Ascending aorta (tissue), 2 donors: ENCODE measurements at regions of chr22 and their contacts with region 1.

Region 1: GRCh38 chr22:37953437-37954179 is at the starts of genes C22orf23 and POLR2F:
- DNase-seq: peak; percentile 64 to 97
- H3K4me3 ChIP-seq: peak within 1 kb of the TSS; percentile 73 to 95
- H3K27ac ChIP-seq: peak within 1 kb of the TSS; percentile 54 to 63
- H3K4me1 ChIP-seq: peaks cover 2 to 15% of the 10 kb centered on the region in 2 donors
- H3K27me3 ChIP-seq: no peaks in the 10 kb centered on the region
- CTCF ChIP-seq: no peak
- total RNA-seq, gene C22orf23: not detected
- total RNA-seq, gene POLR2F: 204 TPM

Region 2: DNA sequence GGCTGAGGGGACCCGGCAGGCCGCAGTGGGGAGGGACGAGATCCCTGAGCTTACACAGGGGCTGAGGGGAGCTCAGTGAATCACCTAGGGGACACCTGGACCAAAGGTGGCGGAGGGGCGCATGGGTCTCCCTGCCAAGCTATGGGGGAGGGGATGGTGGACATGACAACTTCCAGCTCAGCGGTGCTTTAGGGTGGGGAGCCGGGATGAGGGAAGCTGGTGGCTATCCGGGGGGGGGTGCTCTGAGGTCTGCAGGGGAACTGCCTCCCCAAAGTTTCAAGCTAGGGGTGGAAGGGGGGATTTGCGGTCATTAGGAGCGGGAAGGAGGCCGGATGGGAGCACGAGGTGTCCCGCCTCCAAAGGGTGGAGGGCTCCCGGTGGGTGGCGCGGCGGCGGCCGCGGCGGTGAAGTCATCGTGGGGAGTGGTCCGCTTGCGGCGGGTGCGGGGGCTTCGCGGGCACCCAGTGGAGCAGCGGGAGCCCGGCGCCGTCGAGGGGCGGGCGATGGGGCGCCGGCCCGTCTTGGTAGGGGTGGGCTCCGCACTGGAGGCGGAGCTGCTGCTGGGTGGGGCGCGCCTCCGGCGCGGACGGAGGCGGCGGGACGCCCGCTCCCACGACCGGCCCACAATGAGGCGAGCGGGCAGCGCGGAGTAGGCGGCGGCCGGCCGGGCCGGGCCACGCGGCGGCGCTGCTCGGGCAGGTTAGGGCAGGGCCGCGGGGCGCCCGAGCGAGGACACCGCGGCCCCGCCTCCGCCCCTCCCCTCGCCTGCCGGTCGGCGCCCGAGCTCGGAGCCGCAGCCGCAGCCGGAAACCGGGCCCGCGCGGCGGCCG is 47.9 kb before region 1 on chr22 and contains the start of gene MICALL1:
- intact Hi-C with region 1: loop called (anchors 1 kb)
- DNase-seq: peak in 1 of 2 donors; percentile 84
- H3K4me3 ChIP-seq: peak within 1 kb of the TSS; percentile 85 to 100
- H3K27ac ChIP-seq: peak within 1 kb of the TSS; percentile 88 to 93
- H3K4me1 ChIP-seq: peaks cover 7 to 29% of the 10 kb centered on the region in 2 donors
- H3K27me3 ChIP-seq: no peaks in the 10 kb centered on the region
- CTCF ChIP-seq: peak in 1 of 3 experiments; percentile 39
- total RNA-seq, gene MICALL1: 43.9 TPM

Region 3: GRCh38 chr22:38554281-38554680 is 600.7 kb after region 1 on chr22:
- intact Hi-C with region 1: loop called (anchors 5 kb)
- DNase-seq: no peak
- H3K4me3 ChIP-seq: no peak overlapping the region
- H3K27ac ChIP-seq: peak overlapping the region in 1 of 2 donors; percentile 17
- H3K4me1 ChIP-seq: no peaks in the 10 kb centered on the region
- H3K27me3 ChIP-seq: no peaks in the 10 kb centered on the region
- CTCF ChIP-seq: no peak